Heart left ventricle (tissue), 16 donors: ENCODE measurements at regions of chr17 and their contacts with region 1.

Region 1: GRCh38 chr17:44775136-44775837 is 16.5 kb downstream of the ADAM11 start:
- DNase-seq: peak in 4 of 5 donors; percentile 96 to 98 (median 96)
- ATAC-seq: peak; percentile 93 to 94 (median 94)
- H3K4me3 ChIP-seq: peak overlapping the region; percentile 31 to 74 (median 63)
- H3K27ac ChIP-seq: peak overlapping the region in 6 of 12 donors; percentile 7 to 82 (median 36)
- H3K4me1 ChIP-seq: peaks cover 0 to 30% (median 21%) of the 10 kb centered on the region in 12 donors
- H3K27me3 ChIP-seq: no peaks in the 10 kb centered on the region
- CTCF ChIP-seq: peak in 3 of 12 donors; percentile 3 to 38 (median 7)
- POLR2A ChIP-seq: no peak

Region 2: DNA sequence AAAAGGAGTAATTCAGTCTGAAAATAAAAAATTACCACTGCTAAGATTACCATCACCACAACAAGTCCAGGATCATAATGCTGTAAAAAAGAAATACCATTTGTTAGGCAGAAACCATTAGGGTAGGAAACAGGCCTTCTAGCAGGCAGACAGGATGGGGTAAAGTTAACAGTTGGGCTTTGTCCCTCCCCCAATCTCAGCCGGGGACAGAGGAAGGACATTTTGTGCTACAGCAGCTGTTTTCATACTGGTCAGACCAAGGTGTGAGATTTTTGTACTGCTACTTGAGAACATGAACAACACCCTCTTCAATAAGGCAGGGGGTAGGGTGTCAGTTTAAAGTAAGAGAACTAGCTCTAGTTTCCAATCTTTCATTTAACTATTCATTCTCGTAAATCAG is 336.7 kb before region 1 on chr17:
- intact Hi-C with region 1: no loop called
- DNase-seq: no peak
- ATAC-seq: peak; percentile 85 to 94 (median 89)
- H3K4me3 ChIP-seq: no peak overlapping the region
- H3K27ac ChIP-seq: peak overlapping the region in 4 of 12 donors; percentile 16 to 48 (median 30)
- H3K4me1 ChIP-seq: peaks cover 0 to 23% (median 14%) of the 10 kb centered on the region in 12 donors
- H3K27me3 ChIP-seq: no peaks in the 10 kb centered on the region
- CTCF ChIP-seq: no peak
- POLR2A ChIP-seq: no peak

Region 3: GRCh38 chr17:44864866-44865660 is 89.8 kb after region 1 on chr17:
- intact Hi-C with region 1: loop called (anchors 1 to 2 kb)
- DNase-seq: peak in 4 of 5 donors; percentile 63 to 72 (median 64)
- ATAC-seq: peak; percentile 55 to 80 (median 75)
- H3K4me3 ChIP-seq: no peak overlapping the region
- H3K27ac ChIP-seq: peak overlapping the region in 2 of 12 donors; percentile 41 to 78
- H3K4me1 ChIP-seq: peaks cover 0 to 15% (median 0%) of the 10 kb centered on the region in 12 donors
- H3K27me3 ChIP-seq: no peaks in the 10 kb centered on the region
- CTCF ChIP-seq: peak; percentile 72 to 95 (median 86)
- POLR2A ChIP-seq: no peak